Activated T-helper 1 cell treated with anti-CD3 and anti-CD28 coated beads, Interleukin-12 subunit alpha, Interleukin-12 subunit beta, Interleukin-2, Interleukin-4 antibody, amounts not matched to agents 30 ng/mL and 10 ng/mL and 1 ng/mL, durations not matched to agents 14 hours and 24 hours and 36 hours (primary cell): ENCODE measurements at regions of chr21 and their contacts with region 1.

Region 1: GRCh38 chr21:15034126-15034853 is 30.5 kb downstream of the NRIP1 start:
- DNase-seq: no peak
- H3K4me3 Mint-ChIP-seq: no peak overlapping the region
- H3K27ac Mint-ChIP-seq: peak overlapping the region; percentile 63
- H3K4me1 Mint-ChIP-seq: peaks cover 20% of the 10 kb centered on the region
- H3K27me3 Mint-ChIP-seq: no peaks in the 10 kb centered on the region

Region 2: DNA sequence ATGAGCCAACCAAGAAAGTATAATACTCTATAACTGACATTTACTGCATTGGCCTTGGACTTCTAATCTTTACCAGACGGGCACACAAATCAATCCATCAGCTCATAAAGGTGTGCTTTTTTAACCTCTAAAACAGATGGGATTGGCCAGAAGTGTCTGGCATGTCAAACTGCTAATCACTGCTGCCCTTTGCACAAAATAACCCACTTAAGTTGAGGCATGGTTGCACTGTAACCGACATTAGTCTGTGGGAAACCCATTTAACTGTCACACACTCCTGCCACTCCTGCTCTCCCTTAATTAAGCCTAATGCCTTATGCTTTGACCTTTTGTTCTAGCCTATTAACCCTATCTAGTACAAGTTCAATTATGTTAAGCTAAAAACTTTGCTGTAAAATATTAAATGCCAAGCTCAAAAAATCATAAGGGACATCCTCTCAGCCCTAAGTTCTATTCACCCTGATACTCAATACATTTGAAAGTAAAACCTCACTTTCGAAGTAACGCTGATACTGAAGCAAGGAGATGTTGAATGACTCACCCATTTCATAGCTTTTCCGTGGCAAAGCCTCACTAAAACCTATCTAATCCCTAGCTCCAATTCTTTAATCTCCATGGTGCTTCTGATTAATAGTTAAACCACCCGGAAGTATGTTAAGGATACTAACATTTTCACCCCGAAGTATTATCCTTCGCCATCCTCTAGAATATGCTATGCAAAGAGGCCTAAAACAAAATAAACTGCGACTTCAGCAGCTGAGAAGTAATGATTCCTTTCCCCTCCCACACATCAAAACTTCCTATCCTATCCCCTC is 17.6 kb after region 1 on chr21:
- intact Hi-C with region 1: loop called (anchors 2 kb)
- DNase-seq: no peak
- H3K4me3 Mint-ChIP-seq: peak overlapping the region; percentile 61
- H3K27ac Mint-ChIP-seq: peak overlapping the region; percentile 70
- H3K4me1 Mint-ChIP-seq: peaks cover 69% of the 10 kb centered on the region
- H3K27me3 Mint-ChIP-seq: no peaks in the 10 kb centered on the region

Region 3: DNA sequence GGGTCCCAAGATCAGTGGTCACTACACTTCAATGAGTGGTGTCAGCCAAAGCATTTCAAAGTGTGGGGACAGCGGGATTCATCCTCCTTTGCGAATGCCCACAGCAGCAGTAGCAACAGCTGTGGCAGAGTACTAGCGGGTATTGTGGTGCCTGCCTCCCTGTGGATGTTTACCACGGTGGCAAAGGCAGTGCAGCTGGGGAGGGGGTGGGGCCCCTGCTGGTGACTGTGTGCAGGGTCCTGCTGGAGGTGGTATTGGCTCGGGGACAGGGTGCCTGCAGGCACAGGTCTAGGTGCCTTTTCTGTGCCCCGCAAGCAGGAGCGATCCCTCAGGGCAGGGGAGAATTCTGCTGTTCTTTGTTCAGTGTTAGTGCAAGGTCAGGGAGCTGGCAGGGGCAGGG is 1111.2 kb after region 1 on chr21:
- intact Hi-C with region 1: no loop called
- DNase-seq: no peak
- H3K4me3 Mint-ChIP-seq: no peak overlapping the region
- H3K27ac Mint-ChIP-seq: no peak overlapping the region
- H3K4me1 Mint-ChIP-seq: no peaks in the 10 kb centered on the region
- H3K27me3 Mint-ChIP-seq: no peaks in the 10 kb centered on the region